ENCODE measurements at regions of chr15 and their contacts with region 1.

Region 1: DNA sequence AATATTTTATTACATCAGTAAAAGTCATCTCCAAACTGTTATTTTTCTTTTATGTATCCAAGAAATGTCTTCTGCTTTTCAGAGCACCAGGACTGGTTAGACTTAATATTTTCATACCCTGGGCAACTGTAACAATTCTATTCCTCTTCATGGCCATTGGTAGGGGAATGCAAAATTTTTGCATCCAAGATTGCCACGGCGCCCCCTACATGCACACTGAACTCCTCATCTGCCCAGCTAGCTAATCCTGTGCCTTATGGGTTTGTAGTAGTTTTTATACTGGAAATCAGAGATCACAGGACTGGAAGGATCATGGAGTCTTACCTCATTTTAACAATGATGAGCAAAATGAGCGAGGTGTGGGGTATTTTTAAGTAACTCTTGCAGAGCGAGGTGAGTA is 74.2 kb downstream of the CRTC3 start:
- DNase-seq: no peak
- ATAC-seq: peak; percentile 77
- H3K4me3 ChIP-seq: no peak overlapping the region
- H3K27ac ChIP-seq: no peak overlapping the region
- H3K4me1 ChIP-seq: peaks cover 3% of the 10 kb centered on the region
- H3K27me3 ChIP-seq: no peaks in the 10 kb centered on the region
- CTCF ChIP-seq: peak; percentile 39 to 49 (median 41); a peak in 5 of 6 replicates
- EP300 ChIP-seq: no peak
- POLR2A ChIP-seq: no peak
- RAD21 ChIP-seq: peak; percentile 51

Region 2: DNA sequence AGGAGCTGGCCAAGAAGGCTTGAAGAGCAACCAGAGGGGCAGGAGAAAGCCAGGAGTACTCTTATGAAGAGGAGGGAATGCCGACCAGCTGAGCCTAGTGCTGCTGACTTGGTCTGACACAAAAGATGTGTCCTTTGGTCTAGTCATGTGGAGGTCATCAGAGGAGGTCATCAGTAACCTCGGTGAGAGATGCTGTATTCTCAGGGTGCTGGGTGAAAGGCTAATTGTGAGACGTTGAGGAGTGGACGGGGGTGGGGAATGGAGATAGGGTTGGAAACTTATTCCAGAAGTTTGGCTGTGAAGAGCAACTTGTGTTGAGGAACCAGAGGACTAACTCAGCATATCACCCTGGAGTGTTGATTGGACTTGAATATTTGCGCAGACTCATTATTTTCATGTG is 68.6 kb before region 1 on chr15:
- CTCF ChIA-PET with region 1: interaction called, 13 read pairs
- POLR2A ChIA-PET with region 1: no interaction called
- RAD21 ChIA-PET with region 1: interaction called, 4 read pairs
- SMC1A ChIA-PET with region 1: interaction called, 7 read pairs
- in situ Hi-C with region 1: no loop called
- intact Hi-C with region 1: loop called (anchors 5 kb)
- DNase-seq: no peak
- ATAC-seq: no peak
- H3K4me3 ChIP-seq: no peak overlapping the region
- H3K27ac ChIP-seq: no peak overlapping the region
- H3K4me1 ChIP-seq: 0 out of 2 replicates have a peak, but pooled peaks cover 4% of the 10 kb centered on the region
- H3K27me3 ChIP-seq: no peaks in the 10 kb centered on the region
- CTCF ChIP-seq: no peak
- EP300 ChIP-seq: no peak
- POLR2A ChIP-seq: no peak
- RAD21 ChIP-seq: no peak